Activated CD4-positive, alpha-beta memory T cell treated with anti-CD3 and anti-CD28 coated beads for 36 hours (primary cell): ENCODE measurements at regions of chr1 and their contacts with region 1.

Region 1: DNA sequence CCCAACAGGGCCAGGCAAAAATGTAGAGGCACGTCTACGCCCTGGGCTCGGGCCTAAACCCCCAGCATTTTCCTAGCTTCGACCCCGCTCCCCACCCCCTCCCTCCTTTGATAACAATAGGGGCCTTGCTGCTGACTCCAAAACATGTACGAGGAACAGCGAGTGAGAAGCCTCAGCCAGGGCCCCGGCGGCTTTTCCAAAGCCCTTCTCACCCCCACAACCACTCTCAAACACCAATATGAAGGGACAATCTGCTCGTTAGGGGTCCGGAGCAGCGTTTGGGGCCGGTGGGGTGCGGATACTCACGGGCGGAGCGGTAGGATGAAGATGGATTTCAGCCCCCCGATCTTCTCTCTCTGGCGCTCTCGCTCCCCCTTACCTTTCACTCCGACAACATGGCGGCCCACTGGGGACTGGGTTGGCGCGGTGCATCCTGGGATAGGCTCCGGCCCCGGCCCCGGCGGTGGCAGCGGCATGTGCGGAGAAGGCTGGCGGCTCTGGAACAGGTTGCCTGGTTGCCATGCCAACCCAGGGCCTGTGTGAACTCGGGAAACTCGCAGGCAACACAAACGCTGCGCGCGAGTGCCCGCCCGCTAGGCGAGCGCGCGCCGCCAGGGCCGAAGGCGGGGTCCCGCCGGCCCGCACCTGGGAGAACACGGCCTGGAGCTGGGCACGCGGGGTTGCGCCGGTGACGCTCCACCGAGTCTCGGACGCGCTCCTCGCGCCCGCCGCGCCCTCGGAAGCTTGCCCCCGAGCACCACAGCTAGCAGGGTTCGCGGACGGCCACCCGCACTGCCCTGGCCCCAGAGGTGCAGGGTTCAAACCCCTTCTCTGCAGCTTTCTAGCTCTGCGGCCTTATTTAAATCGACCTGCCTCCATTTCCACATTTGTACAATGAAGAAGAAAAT is at the start of gene PUM1:
- DNase-seq: peak; percentile 99
- H3K4me3 Mint-ChIP-seq: peak within 1 kb of the TSS; percentile 98
- H3K27ac Mint-ChIP-seq: peak within 1 kb of the TSS; percentile 100
- H3K4me1 Mint-ChIP-seq: peaks cover 22% of the 10 kb centered on the region
- H3K27me3 Mint-ChIP-seq: peaks cover 2% of the 10 kb centered on the region
- total RNA-seq, gene PUM1: 77.8 to 80.5 TPM

Region 2: DNA sequence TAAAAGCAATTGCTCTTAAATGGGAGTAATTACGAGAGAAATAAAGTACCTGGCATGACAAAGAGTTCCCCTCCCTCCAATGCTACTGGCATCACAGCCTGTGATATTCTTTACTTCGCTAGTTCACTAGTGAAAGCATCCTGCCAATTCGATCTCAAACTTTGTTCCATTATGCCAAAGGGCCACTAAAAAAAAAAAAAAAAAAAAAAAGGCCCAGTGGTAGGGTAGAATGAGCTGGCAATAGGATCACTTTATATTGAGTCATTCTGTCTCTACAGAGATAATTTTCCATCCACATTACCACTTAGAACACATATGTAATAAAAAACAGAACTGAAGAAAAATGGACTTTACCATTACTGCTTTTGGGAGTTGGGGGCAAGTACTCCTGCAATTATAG is 11.2 kb before region 1 on chr1:
- CTCF ChIA-PET with region 1: no interaction called
- POLR2A ChIA-PET with region 1: interaction called, 6 read pairs
- intact Hi-C with region 1: loop called (anchors 1 kb)
- DNase-seq: peak; percentile 14
- H3K4me3 Mint-ChIP-seq: no peak overlapping the region
- H3K27ac Mint-ChIP-seq: peak overlapping the region; percentile 83
- H3K4me1 Mint-ChIP-seq: peaks cover 59% of the 10 kb centered on the region
- H3K27me3 Mint-ChIP-seq: no peaks in the 10 kb centered on the region

Region 3: GRCh38 chr1:31189696-31190674 is 124.4 kb after region 1 on chr1:
- CTCF ChIA-PET with region 1: no interaction called
- POLR2A ChIA-PET with region 1: no interaction called
- intact Hi-C with region 1: no loop called
- DNase-seq: no peak
- H3K4me3 Mint-ChIP-seq: no peak overlapping the region
- H3K27ac Mint-ChIP-seq: no peak overlapping the region
- H3K4me1 Mint-ChIP-seq: no peaks in the 10 kb centered on the region
- H3K27me3 Mint-ChIP-seq: peaks cover 5% of the 10 kb centered on the region

Region 4: GRCh38 chr1:31296486-31297276 is 231.1 kb after region 1 on chr1 and contains the starts of genes SNRNP40 and ZCCHC17:
- CTCF ChIA-PET with region 1: no interaction called
- POLR2A ChIA-PET with region 1: no interaction called
- intact Hi-C with region 1: loop called (anchors 2 kb)
- DNase-seq: peak; percentile 95
- H3K4me3 Mint-ChIP-seq: no peak within 1 kb of the TSS
- H3K27ac Mint-ChIP-seq: no peak within 1 kb of the TSS
- H3K4me1 Mint-ChIP-seq: peaks cover 32% of the 10 kb centered on the region
- H3K27me3 Mint-ChIP-seq: no peaks in the 10 kb centered on the region
- total RNA-seq, gene SNRNP40: 83.7 to 96.4 TPM
- total RNA-seq, gene ZCCHC17: 24.4 to 29.6 TPM